MCF 10A (cell line): ENCODE measurements at regions of chr10 and their contacts with region 1.

Region 1: DNA sequence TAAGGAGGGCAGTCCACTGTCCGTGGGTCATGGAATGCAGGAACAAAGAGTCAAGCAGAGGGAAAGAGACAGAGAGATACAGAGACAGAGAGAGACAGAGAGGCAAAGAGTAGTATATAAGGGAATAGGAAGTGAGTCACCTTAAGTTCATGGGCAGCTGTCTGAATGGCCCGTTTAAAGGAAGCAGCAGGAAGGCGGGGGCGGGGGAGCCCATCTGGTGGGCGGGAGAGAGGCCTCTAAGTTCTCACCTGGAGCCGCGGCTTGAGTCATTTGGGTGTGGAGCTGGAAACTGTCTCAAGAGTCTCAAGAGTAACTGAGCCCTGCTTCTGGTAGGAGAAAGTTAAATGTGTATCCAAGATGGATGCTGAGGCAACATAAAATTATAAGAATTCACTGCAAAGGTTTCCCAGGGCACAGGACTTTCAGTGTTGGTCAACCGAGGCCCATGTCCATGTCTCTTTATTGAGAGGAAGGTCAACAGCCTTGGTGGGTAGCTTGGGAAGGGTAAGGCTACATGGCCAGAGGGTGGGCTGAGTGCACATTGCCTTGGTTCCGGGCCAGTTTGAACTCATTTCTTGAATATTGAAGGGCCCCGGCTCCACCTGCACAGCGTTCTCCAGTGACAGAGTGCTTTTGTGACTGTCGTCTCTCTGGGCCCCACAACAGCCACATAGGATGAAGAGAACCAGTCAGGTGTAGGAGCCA is 85.5 kb upstream of the CACUL1 start:
- DNase-seq: peak; percentile 96
- H3K4me3 Mint-ChIP-seq: peak overlapping the region; percentile 55
- H3K27ac Mint-ChIP-seq: peak overlapping the region; percentile 63
- H3K4me1 Mint-ChIP-seq: peaks cover 48% of the 10 kb centered on the region
- H3K27me3 Mint-ChIP-seq: no peaks in the 10 kb centered on the region
- CTCF ChIP-seq: no peak

Region 2: DNA sequence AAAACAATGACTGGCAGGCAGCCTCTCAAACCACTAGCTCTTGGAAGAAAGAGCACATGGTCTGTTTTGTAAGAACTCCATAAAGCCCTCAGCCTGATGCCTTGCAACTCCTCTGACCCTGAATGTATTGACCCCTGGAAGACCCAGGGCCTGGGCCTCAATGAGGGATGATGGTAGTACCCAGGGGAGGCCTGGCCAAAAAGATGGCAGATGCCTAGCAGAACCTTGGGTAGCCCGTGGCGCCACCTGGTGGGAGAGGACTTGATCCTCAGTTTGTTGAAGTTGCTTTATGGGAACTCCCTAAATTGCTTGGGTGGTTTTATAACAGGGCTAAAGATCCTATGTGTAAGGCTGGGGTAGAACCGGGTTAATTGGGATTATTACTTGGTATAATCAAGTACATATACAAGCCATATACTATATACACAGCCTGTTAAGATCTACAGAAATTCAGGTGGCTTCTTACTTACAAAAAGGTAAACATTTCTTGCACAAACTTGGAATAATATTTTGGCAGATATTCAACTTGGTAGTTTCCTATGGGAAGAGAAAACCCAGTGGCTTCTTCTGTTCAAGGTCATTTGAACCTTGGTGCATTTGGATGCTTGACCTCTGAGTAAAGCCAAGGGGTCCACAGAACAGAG is 10.3 kb after region 1 on chr10:
- CTCF ChIA-PET with region 1: interaction called, 10 read pairs
- POLR2A ChIA-PET with region 1: interaction called, 6 read pairs
- intact Hi-C with region 1: no loop called
- DNase-seq: peak; percentile 81
- H3K4me3 Mint-ChIP-seq: no peak overlapping the region
- H3K27ac Mint-ChIP-seq: no peak overlapping the region
- H3K4me1 Mint-ChIP-seq: peaks cover 13% of the 10 kb centered on the region
- H3K27me3 Mint-ChIP-seq: no peaks in the 10 kb centered on the region
- CTCF ChIP-seq: peak; percentile 41